ENCODE measurements at regions of chr2 and their contacts with region 1.

Region 1: DNA sequence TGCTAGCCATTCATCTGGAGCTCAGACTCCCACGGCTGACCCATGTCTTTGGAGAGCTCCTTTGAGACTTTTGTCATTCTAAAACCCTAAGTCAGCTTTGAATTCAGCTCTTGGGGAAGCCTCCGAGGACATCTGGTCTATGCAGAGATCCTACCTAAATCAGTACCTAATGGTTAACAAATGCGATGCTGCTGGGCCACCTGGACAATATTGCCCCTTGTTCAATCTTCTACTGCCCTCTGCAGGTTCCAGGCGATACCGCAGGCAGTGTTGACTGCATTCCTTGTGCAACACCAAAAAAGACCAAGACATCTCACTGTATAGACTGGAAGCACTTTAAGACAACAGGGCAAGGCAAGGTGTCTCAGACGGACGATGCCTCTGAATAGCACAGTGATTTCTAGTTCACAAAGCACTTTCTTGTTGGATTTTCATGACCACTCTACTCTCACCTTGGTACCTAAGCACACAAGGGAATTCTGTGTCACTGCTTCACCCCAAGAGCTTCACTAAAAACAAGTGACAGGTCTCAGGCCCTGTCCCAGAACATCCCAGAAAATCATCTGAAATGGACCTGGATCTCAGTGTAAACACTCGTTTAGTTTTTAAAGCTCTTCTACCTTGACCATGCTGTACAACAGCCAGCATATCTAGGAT is 80.9 kb downstream of the XDH start:
- DNase-seq: peak; percentile 68
- H3K4me3 ChIP-seq: no peak overlapping the region
- H3K27ac ChIP-seq: no peak overlapping the region
- H3K27me3 ChIP-seq: no peaks in the 10 kb centered on the region
- CTCF ChIP-seq: peak; percentile 98

Region 2: GRCh38 chr2:30781961-30782533 is 551.6 kb before region 1 on chr2:
- CTCF ChIA-PET with region 1: no interaction called
- POLR2A ChIA-PET with region 1: no interaction called
- DNase-seq: no peak
- H3K4me3 ChIP-seq: no peak overlapping the region
- H3K27ac ChIP-seq: no peak overlapping the region
- H3K27me3 ChIP-seq: no peaks in the 10 kb centered on the region
- CTCF ChIP-seq: no peak

Region 3: GRCh38 chr2:31151501-31151900 is 182.2 kb before region 1 on chr2:
- CTCF ChIA-PET with region 1: interaction called, 23 read pairs
- POLR2A ChIA-PET with region 1: no interaction called
- DNase-seq: no peak
- H3K4me3 ChIP-seq: no peak overlapping the region
- H3K27ac ChIP-seq: no peak overlapping the region
- H3K27me3 ChIP-seq: peaks cover 5% of the 10 kb centered on the region
- CTCF ChIP-seq: peak; percentile 16; the same call in 1 of the 2 replicates

Region 4: DNA sequence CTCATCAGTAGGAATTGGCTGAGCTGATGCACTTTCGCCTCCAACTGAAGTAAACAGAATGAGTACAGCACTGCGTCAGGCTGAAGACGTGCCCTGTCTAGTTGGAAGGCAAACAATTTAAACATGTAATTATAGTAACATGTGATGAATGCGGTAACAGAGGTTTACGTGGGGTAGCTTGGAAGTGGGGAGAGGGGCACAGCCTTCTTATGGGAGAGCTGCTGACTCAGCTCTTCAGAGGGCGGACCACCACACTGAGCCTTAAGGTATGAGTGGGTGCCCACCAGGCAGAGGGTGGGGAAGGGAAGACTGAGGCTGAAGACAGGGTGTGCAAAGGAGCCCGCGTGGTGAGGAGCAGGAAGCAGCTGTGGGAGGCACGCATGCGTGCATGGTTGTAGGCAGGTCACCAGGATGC is 105.9 kb before region 1 on chr2:
- CTCF ChIA-PET with region 1: interaction called, 71 read pairs
- POLR2A ChIA-PET with region 1: no interaction called
- DNase-seq: peak; percentile 27
- H3K4me3 ChIP-seq: no peak overlapping the region
- H3K27ac ChIP-seq: no peak overlapping the region
- H3K27me3 ChIP-seq: peaks cover 11% of the 10 kb centered on the region
- CTCF ChIP-seq: no peak

Region 5: DNA sequence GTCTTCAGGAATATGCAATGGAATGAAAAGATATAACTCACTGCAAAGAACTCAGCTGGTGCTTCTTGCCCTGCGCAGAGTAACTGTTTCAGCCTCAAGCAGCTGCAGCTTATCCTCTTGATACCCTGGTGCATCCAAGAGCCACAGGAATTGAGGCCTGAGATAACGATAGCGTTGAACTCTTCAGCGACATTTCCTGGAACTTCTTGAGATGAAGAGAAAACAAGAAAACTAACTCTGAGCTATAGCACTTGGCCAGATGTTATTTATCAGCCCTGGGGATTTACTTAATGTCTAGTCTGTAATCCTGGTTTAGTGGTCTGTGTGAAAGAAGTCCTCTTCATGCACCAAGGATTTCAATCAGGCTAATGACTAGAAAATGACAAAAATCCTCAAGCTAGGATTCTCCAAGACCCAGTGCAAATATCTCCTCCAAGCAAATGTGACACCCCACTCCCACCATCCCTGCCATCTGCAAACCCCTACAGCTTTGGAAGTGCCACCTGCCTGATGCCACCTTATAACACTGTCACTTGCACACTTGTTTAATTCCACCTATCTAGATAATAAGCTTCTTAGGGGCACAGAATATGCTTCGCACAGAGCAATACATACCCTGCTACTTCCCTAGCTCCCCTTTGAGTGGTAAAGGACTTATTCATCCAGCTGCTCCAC is 59.1 kb before region 1 on chr2:
- CTCF ChIA-PET with region 1: interaction called, 12 read pairs
- POLR2A ChIA-PET with region 1: no interaction called
- DNase-seq: peak; percentile 62
- H3K4me3 ChIP-seq: no peak overlapping the region
- H3K27ac ChIP-seq: peak overlapping the region; percentile 42
- H3K27me3 ChIP-seq: peaks cover 6% of the 10 kb centered on the region
- CTCF ChIP-seq: no peak

Region 6: DNA sequence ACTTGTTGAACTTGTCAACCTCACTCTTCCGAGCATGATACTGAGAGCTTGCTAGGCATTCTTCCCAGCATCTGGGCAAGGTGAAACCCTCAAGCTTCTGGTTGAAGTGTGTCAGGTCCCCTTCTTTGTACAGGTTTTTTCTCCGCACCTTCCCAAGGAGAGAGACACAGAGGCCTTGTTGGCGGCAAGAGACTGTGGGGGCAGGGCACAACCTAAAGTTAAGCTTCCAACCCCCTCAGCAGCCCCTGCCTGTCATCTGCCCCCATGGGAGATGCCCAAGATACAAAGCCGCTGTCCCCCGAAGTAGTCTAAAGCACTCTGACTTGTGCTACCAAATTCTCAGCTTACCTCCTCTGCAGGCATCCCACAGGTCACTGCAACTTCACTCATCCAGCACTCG is 16.0 kb after region 1 on chr2:
- CTCF ChIA-PET with region 1: interaction called, 22 read pairs
- POLR2A ChIA-PET with region 1: interaction called, 4 read pairs
- DNase-seq: no peak
- H3K4me3 ChIP-seq: no peak overlapping the region
- H3K27ac ChIP-seq: no peak overlapping the region
- H3K27me3 ChIP-seq: no peaks in the 10 kb centered on the region
- CTCF ChIP-seq: no peak